GM12878 (cell line): ENCODE measurements at regions of chr6 and their contacts with region 1.

Region 1: DNA sequence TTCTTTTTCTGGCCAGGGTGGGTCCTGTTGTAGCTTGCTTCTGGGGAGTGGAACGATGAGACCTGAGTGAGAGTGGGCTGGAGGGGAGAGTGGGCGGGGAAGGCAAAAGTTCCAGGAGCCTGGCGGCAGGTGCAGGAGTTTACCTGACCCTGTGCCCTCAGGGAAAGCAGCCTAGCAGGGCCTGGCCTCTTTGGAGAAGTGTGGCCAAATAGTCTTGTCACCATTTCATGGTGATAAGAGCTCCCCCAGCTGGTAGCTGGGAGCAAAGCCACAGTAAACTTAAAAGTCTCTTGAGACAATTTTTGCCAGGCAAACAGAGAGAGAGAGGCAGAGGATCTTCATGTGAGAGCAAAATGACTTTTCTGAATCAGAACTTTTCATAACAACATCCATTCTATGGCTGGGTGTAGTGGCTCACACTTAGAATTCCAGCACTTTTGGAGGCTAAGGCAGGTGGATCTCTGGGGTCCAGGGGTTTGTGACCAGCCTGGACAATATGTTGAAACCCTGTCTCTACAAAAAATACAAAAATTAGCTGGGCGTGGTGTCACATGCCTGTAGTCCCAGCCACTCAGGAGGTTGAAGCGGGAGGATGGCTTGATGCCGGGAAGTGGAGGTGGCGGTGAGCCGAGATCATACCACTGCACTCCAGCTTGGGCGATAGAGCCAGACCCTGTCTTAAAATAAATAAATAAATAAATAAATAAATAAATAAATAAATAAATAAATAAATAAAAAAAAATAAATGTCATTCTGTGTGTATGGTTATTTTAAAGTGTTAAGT is 161.8 kb upstream of the SCGN start:
- DNase-seq: peak; percentile 42
- ATAC-seq: peak; percentile 99
- H3K4me3 ChIP-seq: no peak overlapping the region
- H3K27ac ChIP-seq: no peak overlapping the region; the same call in 1 of the 2 replicates
- H3K4me1 ChIP-seq: no peaks in the 10 kb centered on the region
- H3K27me3 ChIP-seq: no peaks in the 10 kb centered on the region
- CTCF ChIP-seq: peak; percentile 84 to 89 (median 88)
- EP300 ChIP-seq: no peak
- POLR2A ChIP-seq: no peak
- RAD21 ChIP-seq: peak; percentile 97

Region 2: DNA sequence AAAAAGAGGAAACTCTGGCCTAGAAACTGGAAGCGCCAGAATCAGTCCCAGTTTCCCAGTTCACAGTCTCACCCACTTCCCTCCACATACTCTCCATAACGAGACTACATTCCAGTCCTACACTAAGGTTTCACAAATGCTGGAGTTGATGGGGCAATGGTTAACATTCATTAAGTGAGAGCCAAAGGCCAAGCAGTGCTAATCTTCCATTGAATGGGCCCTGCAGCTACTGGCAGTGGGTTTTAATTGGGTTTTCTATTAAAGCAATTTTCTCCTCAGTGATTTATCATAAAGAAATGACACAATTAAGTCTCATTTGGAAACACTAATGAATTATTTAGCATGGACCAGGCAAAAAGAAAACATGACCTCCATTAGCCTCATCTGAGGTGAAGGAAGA is 1385.0 kb before region 1 on chr6:
- CTCF ChIA-PET with region 1: no interaction called
- POLR2A ChIA-PET with region 1: no interaction called
- RAD21 ChIA-PET with region 1: no interaction called
- SMC1A ChIA-PET with region 1: no interaction called
- in situ Hi-C with region 1: no loop called
- intact Hi-C with region 1: no loop called
- DNase-seq: no peak
- ATAC-seq: no peak
- H3K4me3 ChIP-seq: no peak overlapping the region
- H3K27ac ChIP-seq: no peak overlapping the region
- H3K4me1 ChIP-seq: no peaks in the 10 kb centered on the region
- H3K27me3 ChIP-seq: no peaks in the 10 kb centered on the region
- CTCF ChIP-seq: no peak
- EP300 ChIP-seq: no peak
- POLR2A ChIP-seq: no peak
- RAD21 ChIP-seq: no peak

Region 3: DNA sequence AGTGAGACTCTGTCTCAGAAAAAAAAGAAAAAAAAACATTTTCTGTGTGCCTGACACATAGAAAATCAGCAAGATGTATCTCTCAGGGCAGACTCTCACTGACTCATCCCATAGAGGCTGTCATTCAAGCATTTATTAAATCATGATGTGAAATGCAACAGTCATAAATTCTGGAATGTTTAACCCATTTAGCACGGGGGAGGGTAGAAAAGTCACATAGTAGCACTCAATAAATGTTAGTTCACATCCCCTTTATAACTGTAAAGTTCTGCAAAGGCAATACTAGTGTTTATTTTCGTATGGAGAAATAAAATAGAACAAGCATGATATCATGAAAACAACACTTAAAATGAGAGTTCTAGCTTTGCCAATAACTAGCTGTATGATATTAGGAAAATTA is 226.6 kb before region 1 on chr6:
- CTCF ChIA-PET with region 1: interaction called, 362 read pairs
- POLR2A ChIA-PET with region 1: interaction called, 15 read pairs
- RAD21 ChIA-PET with region 1: interaction called, 133 read pairs
- SMC1A ChIA-PET with region 1: interaction called, 191 read pairs
- in situ Hi-C with region 1: no loop called
- intact Hi-C with region 1: loop called (anchors 1 kb)
- DNase-seq: no peak
- ATAC-seq: no peak
- H3K4me3 ChIP-seq: no peak overlapping the region
- H3K27ac ChIP-seq: no peak overlapping the region
- H3K4me1 ChIP-seq: no peaks in the 10 kb centered on the region
- H3K27me3 ChIP-seq: peaks cover 0 to 3% of the 10 kb centered on the region in 2 experiments; a peak in 1 of 4 replicates
- CTCF ChIP-seq: no peak
- EP300 ChIP-seq: no peak
- POLR2A ChIP-seq: no peak
- RAD21 ChIP-seq: no peak

Region 4: DNA sequence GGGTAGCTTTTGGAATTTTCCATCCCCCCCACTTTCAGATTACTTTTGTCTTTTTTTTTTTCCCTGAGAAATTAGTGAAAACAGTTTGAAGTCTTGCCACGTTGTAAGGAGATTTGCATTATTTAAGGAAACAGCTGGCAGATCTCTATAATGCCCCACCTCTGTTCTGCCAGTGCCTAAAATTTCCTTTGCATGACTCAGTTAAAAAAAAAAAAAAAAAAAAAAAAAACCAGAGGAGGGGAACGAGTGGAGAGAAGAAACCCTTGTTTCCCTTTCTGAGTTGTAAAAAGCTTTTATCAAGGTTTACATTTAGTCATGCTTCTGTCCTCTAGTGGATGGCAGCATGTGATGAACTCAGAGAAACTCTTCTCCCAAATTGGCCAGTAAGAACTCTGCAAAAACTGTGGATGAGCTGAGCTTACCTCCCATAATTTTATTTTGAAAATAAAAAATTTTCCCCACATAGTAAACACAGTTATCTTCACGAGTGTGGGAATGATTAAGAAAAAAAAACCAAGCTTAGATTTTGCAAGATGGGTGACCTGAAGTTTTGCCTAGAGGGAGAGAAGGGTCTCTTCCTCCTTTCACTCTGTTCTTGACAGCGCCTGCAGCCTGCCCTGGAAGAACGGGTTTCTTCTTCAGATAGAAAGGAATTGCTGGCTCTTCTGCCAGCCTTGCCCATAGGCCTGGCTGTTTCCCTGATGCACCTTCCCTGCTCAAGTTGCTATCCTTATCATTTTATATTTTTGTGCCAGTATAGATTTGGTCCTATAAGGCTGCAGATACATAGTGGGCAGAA is 177.3 kb before region 1 on chr6:
- CTCF ChIA-PET with region 1: interaction called, 12 read pairs
- POLR2A ChIA-PET with region 1: no interaction called
- RAD21 ChIA-PET with region 1: interaction called, 4 read pairs
- SMC1A ChIA-PET with region 1: interaction called, 3 read pairs
- in situ Hi-C with region 1: no loop called
- intact Hi-C with region 1: no loop called
- DNase-seq: no peak
- ATAC-seq: peak; percentile 45; the same call in 2 of the 3 replicates
- H3K4me3 ChIP-seq: no peak overlapping the region
- H3K27ac ChIP-seq: no peak overlapping the region
- H3K4me1 ChIP-seq: no peaks in the 10 kb centered on the region
- H3K27me3 ChIP-seq: no peaks in the 10 kb centered on the region
- CTCF ChIP-seq: no peak
- EP300 ChIP-seq: no peak
- POLR2A ChIP-seq: no peak
- RAD21 ChIP-seq: no peak

Region 5: DNA sequence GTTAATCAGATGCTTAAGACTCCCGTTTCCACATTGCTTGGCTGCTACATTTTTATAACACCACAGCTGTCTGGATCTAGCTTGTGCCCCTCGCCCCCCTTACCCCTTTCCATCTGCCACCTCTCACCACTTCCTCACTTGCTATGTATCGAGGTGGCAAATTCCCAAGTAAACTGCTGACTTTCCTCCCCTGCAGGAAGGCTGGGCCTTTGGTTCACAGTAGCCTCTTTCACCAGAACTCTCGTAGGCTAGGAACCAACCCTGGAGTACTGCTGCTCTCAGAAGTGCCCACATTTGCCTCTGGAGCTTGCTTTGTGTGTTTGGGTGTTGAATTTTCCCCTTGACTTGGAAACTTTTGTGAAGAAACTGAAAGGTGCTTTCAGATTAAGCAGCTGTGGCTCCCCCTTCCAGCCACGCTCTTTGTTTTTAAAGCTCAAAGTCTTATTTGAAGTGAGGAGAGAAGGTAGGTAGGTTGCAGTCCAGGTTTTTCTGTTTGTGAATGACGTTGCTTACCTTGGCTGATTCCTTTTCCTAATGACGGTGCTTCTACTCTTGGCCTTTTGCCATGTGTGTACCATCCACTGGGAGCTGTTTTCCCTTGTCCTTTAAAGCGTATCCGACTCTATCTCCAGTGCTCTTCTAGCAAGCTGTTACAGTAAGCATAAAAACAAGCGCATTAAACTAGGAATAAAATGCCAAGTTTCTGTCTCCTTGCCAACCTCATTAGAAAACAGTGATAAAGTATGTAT is 120.6 kb before region 1 on chr6:
- CTCF ChIA-PET with region 1: interaction called, 16 read pairs
- POLR2A ChIA-PET with region 1: no interaction called
- RAD21 ChIA-PET with region 1: interaction called, 21 read pairs
- SMC1A ChIA-PET with region 1: interaction called, 9 read pairs
- in situ Hi-C with region 1: no loop called
- intact Hi-C with region 1: no loop called
- DNase-seq: no peak
- ATAC-seq: peak; percentile 39
- H3K4me3 ChIP-seq: peak overlapping the region; percentile 25; the same call in 1 of the 2 replicates
- H3K27ac ChIP-seq: peak overlapping the region; percentile 56
- H3K4me1 ChIP-seq: peaks cover 26% of the 10 kb centered on the region
- H3K27me3 ChIP-seq: no peaks in the 10 kb centered on the region
- CTCF ChIP-seq: no peak
- EP300 ChIP-seq: no peak
- POLR2A ChIP-seq: no peak
- RAD21 ChIP-seq: no peak

Region 6: GRCh38 chr6:25426901-25427300 is 63.3 kb before region 1 on chr6:
- CTCF ChIA-PET with region 1: interaction called, 11 read pairs
- POLR2A ChIA-PET with region 1: no interaction called
- RAD21 ChIA-PET with region 1: interaction called, 6 read pairs
- SMC1A ChIA-PET with region 1: interaction called, 4 read pairs
- in situ Hi-C with region 1: no loop called
- intact Hi-C with region 1: no loop called
- DNase-seq: no peak
- ATAC-seq: no peak
- H3K4me3 ChIP-seq: no peak overlapping the region
- H3K27ac ChIP-seq: no peak overlapping the region
- H3K4me1 ChIP-seq: no peaks in the 10 kb centered on the region
- H3K27me3 ChIP-seq: no peaks in the 10 kb centered on the region
- CTCF ChIP-seq: no peak
- EP300 ChIP-seq: no peak
- POLR2A ChIP-seq: no peak
- RAD21 ChIP-seq: no peak

Region 7: DNA sequence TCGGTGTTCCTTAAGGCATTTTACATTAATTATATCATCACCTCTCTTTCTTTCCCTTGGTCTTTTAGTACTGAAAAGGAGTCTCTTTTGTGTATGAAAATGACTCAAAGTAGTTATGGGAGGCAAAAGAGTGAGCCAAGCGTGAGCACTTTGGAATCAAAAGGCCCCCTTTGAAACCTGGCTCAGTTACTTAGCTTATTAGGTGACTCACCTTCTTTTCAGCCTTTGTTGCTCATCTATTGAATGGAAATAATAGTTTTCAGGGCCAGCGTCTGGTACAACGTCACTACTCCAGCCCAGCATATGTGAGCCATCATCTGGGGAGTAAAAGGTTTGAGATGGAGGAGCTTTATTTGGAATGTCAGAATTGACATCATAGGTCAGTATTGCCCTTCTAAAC is 14.5 kb after region 1 on chr6:
- CTCF ChIA-PET with region 1: interaction called, 31 read pairs
- POLR2A ChIA-PET with region 1: no interaction called
- RAD21 ChIA-PET with region 1: interaction called, 5 read pairs
- SMC1A ChIA-PET with region 1: interaction called, 27 read pairs
- in situ Hi-C with region 1: no loop called
- intact Hi-C with region 1: no loop called
- DNase-seq: no peak
- ATAC-seq: no peak
- H3K4me3 ChIP-seq: no peak overlapping the region
- H3K27ac ChIP-seq: no peak overlapping the region
- H3K4me1 ChIP-seq: no peaks in the 10 kb centered on the region
- H3K27me3 ChIP-seq: no peaks in the 10 kb centered on the region
- CTCF ChIP-seq: no peak
- EP300 ChIP-seq: no peak
- POLR2A ChIP-seq: no peak
- RAD21 ChIP-seq: no peak

Region 8: GRCh38 chr6:25601800-25602673 is 111.8 kb after region 1 on chr6:
- CTCF ChIA-PET with region 1: interaction called, 14 read pairs
- POLR2A ChIA-PET with region 1: no interaction called
- RAD21 ChIA-PET with region 1: interaction called, 5 read pairs
- SMC1A ChIA-PET with region 1: interaction called, 8 read pairs
- in situ Hi-C with region 1: no loop called
- intact Hi-C with region 1: loop called (anchors 2 kb)
- DNase-seq: no peak
- ATAC-seq: 0 out of 3 replicates have a peak, but pooled peaks have one; percentile 39
- H3K4me3 ChIP-seq: no peak overlapping the region
- H3K27ac ChIP-seq: no peak overlapping the region
- H3K4me1 ChIP-seq: no peaks in the 10 kb centered on the region
- H3K27me3 ChIP-seq: no peaks in the 10 kb centered on the region
- CTCF ChIP-seq: peak; percentile 24 to 69 (median 45); a peak in 5 of 6 replicates
- EP300 ChIP-seq: no peak
- POLR2A ChIP-seq: no peak
- RAD21 ChIP-seq: peak; percentile 72

Region 9: GRCh38 chr6:25842526-25843277 is 352.5 kb after region 1 on chr6:
- CTCF ChIA-PET with region 1: no interaction called
- POLR2A ChIA-PET with region 1: no interaction called
- RAD21 ChIA-PET with region 1: no interaction called
- SMC1A ChIA-PET with region 1: no interaction called
- in situ Hi-C with region 1: no loop called
- intact Hi-C with region 1: no loop called
- DNase-seq: peak; percentile 7
- ATAC-seq: no peak
- H3K4me3 ChIP-seq: no peak overlapping the region
- H3K27ac ChIP-seq: no peak overlapping the region
- H3K4me1 ChIP-seq: no peaks in the 10 kb centered on the region
- H3K27me3 ChIP-seq: peaks cover 0 to 6% of the 10 kb centered on the region in 2 experiments; a peak in 1 of 4 replicates
- CTCF ChIP-seq: no peak
- EP300 ChIP-seq: no peak
- POLR2A ChIP-seq: no peak
- RAD21 ChIP-seq: no peak